ENCODE measurements at regions of chr5 and their contacts with region 1.

Region 1: DNA sequence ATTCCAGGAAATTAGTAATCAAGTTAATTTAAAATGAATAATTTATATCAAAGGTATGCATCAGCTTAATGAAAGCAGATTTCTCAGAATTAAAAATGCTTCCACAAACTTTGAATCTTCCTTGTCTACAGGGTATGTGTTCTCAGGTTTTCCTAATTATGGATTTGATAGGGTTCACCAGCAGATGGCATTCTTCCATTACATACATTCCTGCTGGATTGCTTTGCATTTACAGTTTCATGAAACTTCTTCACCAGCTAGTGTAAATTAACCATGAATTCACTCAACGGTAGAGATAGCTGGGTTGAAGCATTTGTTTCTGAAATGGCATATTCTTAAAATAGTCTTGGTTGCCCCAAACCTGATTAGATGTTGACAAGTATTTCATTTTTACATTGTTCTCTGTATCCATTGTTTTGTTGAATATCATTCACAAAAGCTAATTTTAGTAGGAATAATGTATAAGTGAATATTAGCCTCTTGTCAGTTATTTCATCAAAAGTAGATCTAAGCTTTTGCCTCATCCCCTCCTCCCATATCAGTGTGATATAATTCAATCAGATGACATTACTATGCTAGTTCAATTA is 68.7 kb upstream of the WDR41 start:
- DNase-seq: peak; percentile 8 to 53 (median 30)
- ATAC-seq: peak; percentile 56; the same call in 2 of the 3 replicates
- H3K4me3 ChIP-seq: no peak overlapping the region
- H3K27ac ChIP-seq: no peak overlapping the region
- H3K4me1 ChIP-seq: no peaks in the 10 kb centered on the region
- H3K27me3 ChIP-seq: peaks cover 2 to 15% of the 10 kb centered on the region in 2 experiments; a peak in 4 of 5 replicates
- CTCF ChIP-seq: peak; percentile 40 to 74 (median 55); a peak in 5 of 6 replicates
- EP300 ChIP-seq: no peak
- POLR2A ChIP-seq: no peak
- RAD21 ChIP-seq: peak; percentile 83 to 91

Region 2: GRCh38 chr5:77981818-77982217 is 421.0 kb after region 1 on chr5:
- CTCF ChIA-PET with region 1: no interaction called
- POLR2A ChIA-PET with region 1: no interaction called
- in situ Hi-C with region 1: no loop called
- intact Hi-C with region 1: loop called (anchors 5 kb)
- DNase-seq: no peak
- ATAC-seq: peak; percentile 69
- H3K4me3 ChIP-seq: no peak overlapping the region
- H3K27ac ChIP-seq: no peak overlapping the region
- H3K4me1 ChIP-seq: peaks cover 0 to 3% of the 10 kb centered on the region in 2 experiments; a peak in 1 of 5 replicates
- H3K27me3 ChIP-seq: peaks cover 9 to 21% of the 10 kb centered on the region in 2 experiments
- CTCF ChIP-seq: peak; percentile 19 to 39 (median 29); a peak in 2 of 6 replicates
- EP300 ChIP-seq: no peak
- POLR2A ChIP-seq: no peak
- RAD21 ChIP-seq: peak; percentile 58 to 76

Region 3: DNA sequence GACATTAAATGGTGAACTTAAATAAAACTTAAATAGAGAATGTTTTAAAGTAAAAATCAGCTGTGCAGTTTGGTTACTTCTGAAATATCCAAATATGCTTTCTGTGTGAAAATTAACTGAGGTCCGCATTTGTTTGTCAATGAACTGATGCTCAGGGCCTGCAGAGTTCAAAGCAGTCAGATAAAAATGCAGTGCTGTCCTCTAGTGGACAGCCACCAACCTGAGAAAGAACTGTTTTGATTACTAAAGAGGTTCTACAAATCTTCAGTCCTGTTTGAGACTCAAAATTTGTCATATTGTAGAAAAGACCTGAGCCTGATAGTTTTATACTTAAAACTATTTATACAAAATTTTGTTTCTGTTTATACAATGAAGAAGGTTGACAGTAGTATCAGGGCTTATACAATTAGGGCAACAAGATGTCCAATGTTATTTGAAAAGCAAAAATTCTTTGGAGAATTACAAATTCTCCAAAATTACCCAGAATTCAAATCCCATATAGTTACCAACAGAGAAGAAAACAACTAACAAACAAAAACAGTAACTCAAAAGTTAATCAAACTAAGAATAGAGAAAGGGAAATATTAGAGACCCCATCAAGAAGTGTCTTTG is 447.7 kb after region 1 on chr5:
- CTCF ChIA-PET with region 1: interaction called, 16 read pairs
- POLR2A ChIA-PET with region 1: no interaction called
- in situ Hi-C with region 1: no loop called
- intact Hi-C with region 1: loop called (anchors 2 kb)
- DNase-seq: peak in 3 of 4 experiments; percentile 18 to 48 (median 32)
- ATAC-seq: peak; percentile 76
- H3K4me3 ChIP-seq: no peak overlapping the region
- H3K27ac ChIP-seq: no peak overlapping the region
- H3K4me1 ChIP-seq: no peaks in the 10 kb centered on the region
- H3K27me3 ChIP-seq: no peaks in the 10 kb centered on the region
- CTCF ChIP-seq: peak; percentile 56 to 77 (median 57)
- EP300 ChIP-seq: no peak
- POLR2A ChIP-seq: no peak
- RAD21 ChIP-seq: peak; percentile 72 to 77

Region 4: DNA sequence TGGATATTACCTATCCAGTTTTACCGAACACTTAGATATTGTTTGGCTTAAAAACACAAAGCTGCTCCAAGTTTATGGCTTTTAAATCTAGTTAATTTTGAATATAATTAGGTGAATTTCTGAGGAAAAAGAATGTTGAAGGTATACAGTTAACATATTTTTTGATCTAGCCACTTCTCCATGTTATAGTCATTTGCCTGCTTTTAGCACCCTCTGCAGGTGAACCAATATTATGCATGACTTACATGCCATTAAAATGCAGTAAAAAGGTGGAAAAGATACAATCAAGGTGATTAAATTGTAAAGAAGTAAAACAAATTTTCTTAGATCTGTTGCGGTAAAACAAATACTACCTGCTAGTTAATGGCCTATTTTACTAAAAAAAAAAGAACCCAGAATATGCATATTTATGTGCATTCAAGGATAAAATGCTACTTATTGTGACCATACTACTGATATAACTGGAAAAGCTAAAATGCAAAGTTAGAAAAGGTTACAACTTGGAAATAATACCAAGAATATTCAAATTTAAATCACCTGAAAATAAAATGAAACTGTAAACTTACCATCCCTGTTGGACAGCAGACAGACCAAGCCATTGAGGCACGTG is 601.6 kb after region 1 on chr5:
- CTCF ChIA-PET with region 1: no interaction called
- POLR2A ChIA-PET with region 1: no interaction called
- in situ Hi-C with region 1: no loop called
- intact Hi-C with region 1: loop called (anchors 5 kb)
- DNase-seq: peak; percentile 12 to 44 (median 20)
- ATAC-seq: peak; percentile 65
- H3K4me3 ChIP-seq: no peak overlapping the region
- H3K27ac ChIP-seq: no peak overlapping the region
- H3K4me1 ChIP-seq: no peaks in the 10 kb centered on the region
- H3K27me3 ChIP-seq: no peaks in the 10 kb centered on the region
- CTCF ChIP-seq: peak; percentile 38 to 64 (median 46); a peak in 4 of 6 replicates
- EP300 ChIP-seq: no peak
- POLR2A ChIP-seq: no peak
- RAD21 ChIP-seq: peak in 1 of 2 experiments; percentile 61; a peak in 3 of 4 replicates

Measured in K562 (cell line).